Tibial artery (tissue), 4 donors: ENCODE measurements at regions of chr9 and their contacts with region 1.

Region 1: DNA sequence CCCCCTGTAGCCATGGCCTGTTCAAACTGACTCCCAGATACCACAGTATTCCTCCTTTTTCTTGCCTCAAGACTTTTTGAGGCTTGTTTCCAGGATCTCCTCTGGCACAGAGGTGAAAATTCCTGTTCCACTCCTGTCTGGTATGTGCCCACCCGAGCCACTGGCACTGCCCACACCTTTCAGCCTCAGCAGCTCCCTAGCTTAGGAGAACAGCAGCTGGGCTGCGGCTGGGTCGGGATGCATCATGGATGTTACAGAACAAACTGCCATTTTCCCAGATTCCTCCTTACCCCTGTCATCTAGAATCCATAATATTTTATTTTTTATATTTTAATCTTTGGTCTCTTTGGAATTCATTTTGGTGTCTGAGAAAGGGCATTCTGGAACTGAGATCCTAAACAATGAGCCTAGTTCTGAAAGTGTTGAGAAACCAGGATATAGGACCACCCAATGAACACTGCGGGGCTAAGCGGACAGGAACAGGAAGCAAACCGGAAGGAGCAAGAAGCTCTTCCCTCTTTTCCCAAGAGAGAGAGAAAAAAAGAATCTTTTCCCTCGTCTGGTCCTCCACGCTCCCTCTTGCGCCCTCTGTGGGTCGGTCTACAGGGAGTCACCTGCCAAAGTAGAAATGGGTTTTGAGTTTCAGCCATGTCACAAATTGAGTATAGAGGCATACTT is 12.5 kb downstream of the OR2S2 start:
- DNase-seq: peak; percentile 78 to 86
- H3K4me3 ChIP-seq: no peak overlapping the region
- H3K27ac ChIP-seq: peak overlapping the region; percentile 58 to 62
- H3K4me1 ChIP-seq: peaks cover 0 to 17% (median 12%) of the 10 kb centered on the region in 4 donors
- H3K27me3 ChIP-seq: no peaks in the 10 kb centered on the region
- CTCF ChIP-seq: peak; percentile 81 to 84

Region 2: GRCh38 chr9:35776018-35776417 is 169.5 kb before region 1 on chr9:
- intact Hi-C with region 1: no loop called
- DNase-seq: no peak
- H3K4me3 ChIP-seq: no peak overlapping the region
- H3K27ac ChIP-seq: no peak overlapping the region
- H3K4me1 ChIP-seq: peaks cover 0 to 11% (median 10%) of the 10 kb centered on the region in 4 donors
- H3K27me3 ChIP-seq: no peaks in the 10 kb centered on the region
- CTCF ChIP-seq: no peak

Region 3: GRCh38 chr9:35903049-35903448 is 42.4 kb before region 1 on chr9:
- intact Hi-C with region 1: loop called (anchors 2 kb)
- DNase-seq: no peak
- H3K4me3 ChIP-seq: no peak overlapping the region
- H3K27ac ChIP-seq: peak overlapping the region in 1 of 2 donors; percentile 98
- H3K4me1 ChIP-seq: peaks cover 4 to 52% (median 47%) of the 10 kb centered on the region in 4 donors
- H3K27me3 ChIP-seq: no peaks in the 10 kb centered on the region
- CTCF ChIP-seq: peak; percentile 78 to 85

Region 4: GRCh38 chr9:35976726-35977125 is 31.2 kb after region 1 on chr9:
- intact Hi-C with region 1: no loop called
- DNase-seq: no peak
- H3K4me3 ChIP-seq: no peak overlapping the region
- H3K27ac ChIP-seq: no peak overlapping the region
- H3K4me1 ChIP-seq: peaks cover 0 to 2% (median 0%) of the 10 kb centered on the region in 4 donors
- H3K27me3 ChIP-seq: peaks cover 0 to 18% of the 10 kb centered on the region in 2 donors
- CTCF ChIP-seq: no peak

Region 5: DNA sequence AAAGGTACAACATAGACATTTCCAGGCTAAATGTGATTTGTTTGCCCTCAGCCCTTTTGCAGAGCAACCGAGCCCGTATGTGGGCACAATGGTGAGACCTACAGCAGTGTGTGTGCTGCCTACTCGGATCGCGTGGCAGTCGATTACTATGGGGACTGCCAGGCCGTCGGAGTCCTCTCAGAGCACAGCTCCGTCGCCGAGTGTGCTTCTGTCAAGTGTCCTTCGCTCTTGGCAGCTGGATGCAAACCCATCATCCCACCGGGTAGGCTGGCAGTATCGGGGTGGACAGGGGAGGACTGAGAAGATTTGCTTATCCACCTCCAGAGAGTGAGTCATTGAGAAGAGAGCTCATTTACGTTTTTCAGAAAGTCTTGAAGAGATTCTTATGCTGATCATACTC is 173.2 kb after region 1 on chr9:
- intact Hi-C with region 1: no loop called
- DNase-seq: no peak
- H3K4me3 ChIP-seq: no peak overlapping the region
- H3K27ac ChIP-seq: no peak overlapping the region
- H3K4me1 ChIP-seq: no peaks in the 10 kb centered on the region
- H3K27me3 ChIP-seq: no peaks in the 10 kb centered on the region
- CTCF ChIP-seq: no peak